Caco-2 (cell line): ENCODE measurements at regions of chr19 and their contacts with region 1.

Region 1: DNA sequence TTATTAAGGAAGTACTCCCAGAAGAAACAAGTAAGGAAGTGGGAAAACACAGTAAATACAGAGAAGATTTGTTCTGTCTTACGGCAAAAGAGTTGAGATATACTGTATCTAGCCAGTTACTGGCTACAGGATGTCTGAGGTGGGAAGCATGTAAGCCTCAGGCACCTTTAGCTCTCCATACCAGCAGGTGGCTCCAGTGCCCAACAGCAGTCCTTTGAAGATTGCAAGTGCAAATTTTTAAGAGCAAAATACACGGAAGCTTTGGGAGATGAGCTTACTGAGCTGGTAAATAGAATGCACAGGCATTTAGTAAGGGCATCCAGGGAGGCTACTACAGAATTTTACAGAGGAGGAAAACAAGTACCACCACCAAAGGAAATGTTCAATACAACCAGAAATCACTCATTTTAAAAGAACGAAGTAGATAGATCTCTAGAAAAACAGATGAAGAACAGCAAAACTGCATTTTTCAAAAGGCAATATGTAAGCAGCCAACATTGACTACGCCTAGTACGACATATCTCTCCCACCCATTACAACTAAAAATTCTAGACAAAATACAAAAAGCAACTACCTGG is 57.9 kb upstream of the VSTM2B start:
- DNase-seq: peak; percentile 49 to 58
- H3K4me3 ChIP-seq: no peak overlapping the region
- H3K4me3 Mint-ChIP-seq: no peak overlapping the region
- H3K27ac Mint-ChIP-seq: no peak overlapping the region
- H3K4me1 ChIP-seq: no peaks in the 10 kb centered on the region
- H3K4me1 Mint-ChIP-seq: no peaks in the 10 kb centered on the region
- H3K27me3 ChIP-seq: no peaks in the 10 kb centered on the region
- H3K27me3 Mint-ChIP-seq: no peaks in the 10 kb centered on the region
- CTCF ChIP-seq: peak; percentile 47 to 72

Region 2: GRCh38 chr19:29596885-29597525 is 129.1 kb after region 1 on chr19:
- CTCF ChIA-PET with region 1: interaction called, 6 read pairs
- POLR2A ChIA-PET with region 1: no interaction called
- intact Hi-C with region 1: loop called (anchors 10 kb)
- DNase-seq: peak in 1 of 2 experiments; percentile 33
- H3K4me3 ChIP-seq: no peak overlapping the region
- H3K4me3 Mint-ChIP-seq: no peak overlapping the region
- H3K27ac Mint-ChIP-seq: no peak overlapping the region
- H3K4me1 ChIP-seq: no peaks in the 10 kb centered on the region
- H3K4me1 Mint-ChIP-seq: no peaks in the 10 kb centered on the region
- H3K27me3 ChIP-seq: no peaks in the 10 kb centered on the region
- H3K27me3 Mint-ChIP-seq: peaks cover 7% of the 10 kb centered on the region
- CTCF ChIP-seq: peak; percentile 23 to 34